ENCODE measurements at regions of chr4 and their contacts with region 1.

Region 1: DNA sequence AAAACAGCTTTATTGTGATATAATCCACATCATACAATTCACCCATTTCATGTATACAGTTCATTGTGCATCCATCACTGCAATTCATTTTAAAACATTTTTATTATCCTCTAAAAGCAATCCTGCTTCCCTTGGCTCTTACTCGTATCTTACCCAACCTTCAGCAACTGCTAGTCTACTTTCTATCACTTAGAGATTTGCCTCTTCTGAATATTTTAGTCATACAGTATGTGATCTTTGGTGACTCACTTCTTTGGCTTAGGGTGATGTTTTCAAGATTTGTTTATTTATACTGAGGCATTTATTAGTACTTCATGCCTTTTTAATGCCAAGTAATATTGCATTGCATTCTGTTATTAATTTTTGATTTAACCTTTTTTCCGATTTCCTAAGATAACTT is 15.0 kb upstream of the MSMO1 start:
- DNase-seq: no peak
- ATAC-seq: no peak
- H3K4me3 ChIP-seq: no peak overlapping the region
- H3K27ac ChIP-seq: no peak overlapping the region
- H3K4me1 ChIP-seq: peaks cover 0 to 10% (median 0%) of the 10 kb centered on the region in 9 donors
- H3K27me3 ChIP-seq: no peaks in the 10 kb centered on the region
- CTCF ChIP-seq: no peak

Region 2: DNA sequence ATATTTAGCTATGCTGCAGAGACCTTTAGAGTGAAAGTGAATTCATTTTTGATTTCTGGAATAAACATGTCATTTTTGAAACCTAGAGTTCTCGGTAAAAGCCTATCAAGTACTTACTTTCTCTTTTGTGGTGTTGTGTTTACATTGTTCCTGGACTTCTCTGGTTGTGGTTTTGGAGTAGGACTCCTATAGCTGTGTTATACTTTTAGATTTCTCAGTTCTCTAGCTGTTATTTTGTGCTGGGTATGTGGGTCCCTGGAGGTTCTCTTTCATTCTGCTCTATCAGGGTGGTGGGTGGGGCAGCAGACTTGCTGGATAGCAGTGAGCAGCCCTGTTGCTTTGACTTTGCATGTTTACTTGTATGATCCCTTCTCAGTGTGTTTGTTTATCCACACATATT is 10.7 kb before region 1 on chr4:
- intact Hi-C with region 1: loop called in 1 of 10 experiments (anchors 2 kb)
- DNase-seq: no peak
- ATAC-seq: peak in 4 of 8 donors; percentile 19 to 45 (median 35)
- H3K4me3 ChIP-seq: peak overlapping the region in 6 of 10 donors; percentile 23 to 33 (median 26)
- H3K27ac ChIP-seq: peak overlapping the region in 1 of 10 donors; percentile 10
- H3K4me1 ChIP-seq: peaks cover 0 to 21% (median 0%) of the 10 kb centered on the region in 9 donors
- H3K27me3 ChIP-seq: no peaks in the 10 kb centered on the region
- CTCF ChIP-seq: no peak